ENCODE measurements at regions of chr4 and their contacts with region 1.

Region 1: GRCh38 chr4:17324386-17324830 is 187.5 kb downstream of the QDPR start:
- DNase-seq: peak; percentile 69
- H3K4me3 ChIP-seq: no peak overlapping the region
- H3K27ac ChIP-seq: no peak overlapping the region
- H3K4me1 ChIP-seq: peaks cover 29% of the 10 kb centered on the region
- CTCF ChIP-seq: peak; percentile 90

Region 2: GRCh38 chr4:16289897-16290554 is 1034.4 kb before region 1 on chr4:
- CTCF ChIA-PET with region 1: no interaction called
- POLR2A ChIA-PET with region 1: no interaction called
- intact Hi-C with region 1: loop called (anchors 5 kb)
- DNase-seq: peak; percentile 36
- H3K4me3 ChIP-seq: no peak overlapping the region
- H3K27ac ChIP-seq: no peak overlapping the region
- H3K4me1 ChIP-seq: no peaks in the 10 kb centered on the region
- CTCF ChIP-seq: peak; percentile 90

Region 3: GRCh38 chr4:16858275-16858752 is 466.1 kb before region 1 on chr4:
- CTCF ChIA-PET with region 1: no interaction called
- POLR2A ChIA-PET with region 1: no interaction called
- intact Hi-C with region 1: no loop called
- DNase-seq: no peak
- H3K4me3 ChIP-seq: no peak overlapping the region
- H3K27ac ChIP-seq: no peak overlapping the region
- H3K4me1 ChIP-seq: no peaks in the 10 kb centered on the region
- CTCF ChIP-seq: no peak

Region 4: DNA sequence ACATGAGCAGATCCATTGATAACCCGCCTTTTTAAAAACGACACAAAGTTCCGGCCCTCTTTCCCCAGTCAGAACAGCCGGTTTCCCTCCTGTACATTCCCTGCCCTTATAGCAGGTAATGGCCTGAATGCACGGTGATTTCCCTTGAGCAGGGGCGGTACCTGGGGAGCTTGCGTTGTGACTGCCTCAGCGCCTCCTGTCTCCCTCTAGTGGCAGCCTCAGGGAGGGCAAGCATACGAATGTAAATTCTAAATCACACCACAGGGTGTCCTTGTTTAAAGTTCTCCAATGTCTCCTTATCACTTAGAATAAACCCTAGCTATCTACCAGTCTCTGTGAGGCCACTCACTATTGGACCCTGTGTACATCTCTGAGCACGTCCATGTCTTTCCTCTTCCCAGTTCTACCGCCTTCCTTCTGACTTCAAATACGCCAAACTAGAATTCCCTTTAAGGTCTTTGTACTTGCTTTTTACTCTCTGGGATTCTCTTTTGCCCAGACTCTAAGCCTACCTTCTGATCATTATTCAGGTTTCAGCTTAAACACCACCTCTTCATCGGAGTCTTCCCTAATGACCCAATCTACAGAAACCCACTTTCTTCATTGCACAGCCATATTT is 407.6 kb before region 1 on chr4:
- CTCF ChIA-PET with region 1: no interaction called
- POLR2A ChIA-PET with region 1: interaction called, 3 read pairs
- intact Hi-C with region 1: loop called (anchors 1 kb)
- DNase-seq: peak; percentile 71
- H3K4me3 ChIP-seq: no peak overlapping the region
- H3K27ac ChIP-seq: no peak overlapping the region
- H3K4me1 ChIP-seq: no peaks in the 10 kb centered on the region
- CTCF ChIP-seq: peak; percentile 96

Region 5: DNA sequence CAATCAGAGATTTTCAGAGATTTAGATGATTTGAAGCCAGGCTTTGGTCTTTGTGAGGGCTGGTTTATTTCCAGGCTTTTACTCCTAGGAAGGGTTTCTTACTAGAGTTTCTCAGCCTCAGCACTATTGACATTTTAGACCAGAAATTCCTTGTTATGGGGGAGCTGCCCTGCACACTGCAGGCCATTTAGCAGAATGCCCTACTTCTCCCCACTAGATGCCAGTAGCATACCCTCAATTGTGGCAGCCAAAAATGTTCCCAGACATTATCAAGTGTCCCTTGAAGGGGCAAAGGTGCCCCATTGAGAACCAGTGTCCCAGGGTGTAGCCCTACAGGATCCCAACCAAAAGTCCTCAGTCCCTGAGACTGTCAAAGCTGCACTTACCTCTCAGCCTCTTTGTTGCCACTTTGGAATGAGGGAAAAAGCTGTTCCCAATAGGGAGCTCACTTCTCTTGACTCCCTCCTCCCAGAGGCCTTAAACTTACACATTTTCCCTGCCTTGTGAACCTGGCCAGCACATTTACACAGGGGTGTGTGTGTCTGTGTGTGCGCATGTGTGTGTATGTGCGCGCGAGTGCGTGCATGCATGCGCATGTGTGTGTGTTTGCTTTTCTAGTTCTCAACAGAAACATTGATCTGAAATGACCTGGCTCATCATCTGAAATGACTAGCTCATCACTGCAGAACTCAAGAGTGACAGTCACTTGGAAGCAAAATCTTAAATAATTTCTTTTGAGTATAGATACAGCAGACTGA is 44.0 kb before region 1 on chr4:
- CTCF ChIA-PET with region 1: no interaction called
- POLR2A ChIA-PET with region 1: interaction called, 4 read pairs
- intact Hi-C with region 1: loop called (anchors 2 kb)
- DNase-seq: no peak
- H3K4me3 ChIP-seq: no peak overlapping the region
- H3K27ac ChIP-seq: no peak overlapping the region
- H3K4me1 ChIP-seq: no peaks in the 10 kb centered on the region
- CTCF ChIP-seq: peak; percentile 54

Region 6: GRCh38 chr4:17447675-17448298 is 123.4 kb after region 1 on chr4:
- CTCF ChIA-PET with region 1: interaction called, 6 read pairs
- POLR2A ChIA-PET with region 1: interaction called, 15 read pairs
- intact Hi-C with region 1: loop called (anchors 5 kb)
- DNase-seq: peak; percentile 84
- H3K4me3 ChIP-seq: no peak overlapping the region
- H3K27ac ChIP-seq: no peak overlapping the region
- H3K4me1 ChIP-seq: no peaks in the 10 kb centered on the region
- CTCF ChIP-seq: peak; percentile 92

Region 7: GRCh38 chr4:17523662-17524061 is 199.3 kb after region 1 on chr4:
- CTCF ChIA-PET with region 1: no interaction called
- POLR2A ChIA-PET with region 1: no interaction called
- intact Hi-C with region 1: no loop called
- DNase-seq: no peak
- H3K4me3 ChIP-seq: no peak overlapping the region
- H3K27ac ChIP-seq: no peak overlapping the region
- H3K4me1 ChIP-seq: no peaks in the 10 kb centered on the region
- CTCF ChIP-seq: no peak

Region 8: DNA sequence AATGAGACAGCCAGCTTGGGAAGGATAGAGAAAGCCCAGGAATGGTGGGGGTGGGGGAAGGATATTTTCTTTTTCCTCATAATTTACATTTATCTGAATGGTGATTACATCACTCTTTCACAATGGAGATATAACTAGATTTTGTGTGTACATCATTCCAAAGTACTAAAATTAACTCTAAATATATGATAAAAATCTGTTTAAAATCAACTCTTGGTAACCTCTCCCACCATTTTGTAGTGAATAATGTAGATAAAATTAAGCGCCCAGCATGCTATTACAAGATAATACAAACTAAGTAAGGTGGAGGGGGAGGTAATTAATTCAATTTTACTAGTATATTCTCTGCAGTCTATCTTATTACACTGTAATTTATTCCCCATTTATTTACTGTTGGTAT is 565.3 kb after region 1 on chr4:
- CTCF ChIA-PET with region 1: no interaction called
- POLR2A ChIA-PET with region 1: no interaction called
- intact Hi-C with region 1: no loop called
- DNase-seq: no peak
- H3K4me3 ChIP-seq: no peak overlapping the region
- H3K27ac ChIP-seq: no peak overlapping the region
- H3K4me1 ChIP-seq: no peaks in the 10 kb centered on the region
- CTCF ChIP-seq: no peak